Activated T-helper 2 cell treated with anti-CD3 and anti-CD28 coated beads, Interferon-gamma antibody, Interleukin-2, Interleukin-4, amounts not matched to agents 10 μg/mL and 5 μg/mL and 100 μg/mL, durations not matched to agents 14 hours and 24 hours and 36 hours (primary cell): ENCODE measurements at regions of chr19 and their contacts with region 1.

Region 1: DNA sequence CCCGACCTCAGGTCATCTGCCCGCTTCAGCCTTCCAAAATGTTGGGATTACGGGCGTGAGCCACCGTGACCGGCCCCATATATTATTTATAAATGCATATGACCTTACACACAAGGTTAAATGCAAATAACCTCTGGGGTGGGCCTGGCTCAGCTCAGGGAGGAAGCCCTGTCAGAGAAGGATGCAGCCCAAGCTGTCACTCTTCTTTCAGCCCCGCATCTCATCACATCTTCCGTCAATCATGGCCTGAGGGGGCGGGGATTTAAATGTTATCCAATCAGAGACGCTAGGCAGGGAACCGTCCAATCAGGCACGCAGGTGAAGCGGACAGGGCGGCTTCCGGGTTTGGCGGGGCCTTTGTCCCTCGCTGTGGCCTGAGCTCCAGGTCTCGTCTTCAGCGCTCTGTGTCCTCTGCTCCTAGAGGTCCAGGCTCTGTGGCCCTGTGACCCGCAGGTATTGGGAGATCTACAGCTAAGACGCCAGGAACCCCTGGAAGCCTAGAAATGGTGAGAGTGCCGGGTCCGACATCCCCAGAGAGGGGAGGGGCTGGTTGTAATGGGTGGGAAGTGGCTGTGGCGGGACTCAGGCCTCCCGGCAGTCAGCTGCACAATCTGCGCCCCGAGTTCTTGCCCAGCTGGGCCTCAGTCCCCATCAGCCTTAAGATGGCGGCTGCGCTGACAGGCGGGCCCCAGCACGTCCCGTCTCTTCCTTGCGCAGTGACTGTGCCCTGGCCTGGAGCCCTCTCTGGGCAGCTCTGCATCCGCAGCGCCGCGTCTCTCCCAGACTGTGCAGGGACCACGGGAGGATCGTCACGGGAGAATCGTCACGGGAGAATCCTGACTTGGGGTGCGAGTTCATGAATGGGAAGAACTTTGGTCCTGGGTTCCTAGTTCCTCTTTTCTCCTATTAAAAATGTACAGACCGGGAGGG is at the start of gene ZNF430:
- DNase-seq: peak; percentile 94
- H3K4me3 Mint-ChIP-seq: peak within 1 kb of the TSS; percentile 96
- H3K27ac Mint-ChIP-seq: peak within 1 kb of the TSS; percentile 99
- H3K4me1 Mint-ChIP-seq: peaks cover 24% of the 10 kb centered on the region
- H3K27me3 Mint-ChIP-seq: no peaks in the 10 kb centered on the region
- total RNA-seq, gene ZNF430: 19.6 and 22.5 TPM in 2 replicates

Region 2: DNA sequence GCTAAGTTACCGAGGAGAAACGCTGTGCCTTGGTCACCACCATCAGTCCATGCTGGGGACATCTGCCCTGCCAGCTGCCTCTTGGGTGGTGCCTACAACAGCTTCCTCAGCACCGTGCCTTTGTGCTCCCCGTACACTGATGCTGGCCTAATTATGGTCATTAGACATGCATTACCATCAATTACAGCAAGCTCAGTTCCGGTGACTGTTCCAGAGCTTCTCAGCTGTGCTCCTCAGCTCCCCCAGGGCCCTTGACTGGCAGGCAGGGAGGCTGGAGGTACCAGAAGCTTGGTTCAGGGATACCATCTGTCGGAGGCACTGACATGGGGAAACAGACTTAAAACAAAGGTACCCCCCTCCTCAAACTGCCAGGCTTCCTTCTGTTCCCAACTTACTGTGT is 1442.3 kb before region 1 on chr19:
- intact Hi-C with region 1: no loop called
- DNase-seq: no peak
- H3K4me3 Mint-ChIP-seq: no peak overlapping the region
- H3K27ac Mint-ChIP-seq: no peak overlapping the region
- H3K4me1 Mint-ChIP-seq: peaks cover 5% of the 10 kb centered on the region
- H3K27me3 Mint-ChIP-seq: no peaks in the 10 kb centered on the region

Region 3: DNA sequence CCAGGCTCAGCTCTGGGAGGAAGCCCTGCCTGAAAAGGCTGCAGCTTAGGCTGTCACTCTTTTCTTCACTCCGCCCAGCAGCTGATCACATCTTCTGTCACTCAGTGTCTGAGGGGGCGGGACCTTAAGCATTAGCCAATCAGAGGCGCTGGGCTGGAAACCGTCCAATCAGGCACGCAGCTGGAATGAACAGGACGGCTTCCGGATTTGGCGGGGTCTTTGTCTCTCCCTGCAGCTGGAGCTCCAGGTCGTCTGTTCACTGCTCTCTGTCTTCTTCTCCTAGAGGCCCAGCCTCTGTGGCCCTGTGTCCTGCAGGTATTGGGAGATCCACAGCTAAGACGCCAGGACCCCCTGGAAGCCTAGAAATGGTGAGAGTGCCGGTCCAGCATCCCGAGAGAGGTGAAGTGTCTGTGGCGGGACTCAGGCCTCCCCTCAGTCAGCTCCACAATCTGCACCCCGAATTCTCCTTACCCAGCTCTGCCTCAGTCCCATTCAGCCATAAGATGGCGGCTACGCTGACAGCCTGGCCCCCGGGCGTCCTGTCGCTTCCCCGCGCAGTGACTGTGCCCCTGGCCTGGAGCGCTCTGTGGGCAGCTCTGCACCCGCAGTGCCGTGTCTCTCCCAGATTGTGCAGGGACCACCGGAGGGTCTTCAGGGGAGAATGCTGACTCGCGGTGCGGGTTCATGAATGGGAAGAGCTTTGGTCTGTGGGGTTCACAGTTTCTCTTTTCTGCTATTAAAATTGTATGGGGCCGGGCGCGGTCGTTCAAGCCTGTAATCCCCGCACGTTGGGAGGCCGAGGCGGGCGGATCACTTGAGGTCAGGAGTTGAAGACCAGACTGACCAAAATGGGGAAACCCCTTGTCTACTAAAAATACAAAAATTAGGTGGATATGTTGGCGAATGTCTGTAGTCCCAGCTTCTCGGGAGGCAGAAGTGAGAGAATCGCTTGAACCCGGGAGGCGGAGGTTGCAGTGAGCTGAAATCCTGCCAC is 244.2 kb before region 1 on chr19 and contains the start of gene ZNF66:
- intact Hi-C with region 1: loop called (anchors 5 kb)
- DNase-seq: peak; percentile 93
- H3K4me3 Mint-ChIP-seq: peak within 1 kb of the TSS; percentile 94
- H3K27ac Mint-ChIP-seq: peak within 1 kb of the TSS; percentile 93
- H3K4me1 Mint-ChIP-seq: peaks cover 1% of the 10 kb centered on the region
- H3K27me3 Mint-ChIP-seq: no peaks in the 10 kb centered on the region
- total RNA-seq, gene ZNF66: 8.1 and 8.8 TPM in 2 replicates

Region 4: GRCh38 chr19:21082011-21082975 is 61.7 kb after region 1 on chr19 and contains the start of gene ZNF714:
- intact Hi-C with region 1: loop called (anchors 1 kb)
- DNase-seq: peak; percentile 86
- H3K4me3 Mint-ChIP-seq: peak within 1 kb of the TSS; percentile 97
- H3K27ac Mint-ChIP-seq: peak within 1 kb of the TSS; percentile 97
- H3K4me1 Mint-ChIP-seq: peaks cover 27% of the 10 kb centered on the region
- H3K27me3 Mint-ChIP-seq: no peaks in the 10 kb centered on the region
- total RNA-seq, gene ZNF714: 20.1 and 21.4 TPM in 2 replicates

Region 5: GRCh38 chr19:21328885-21329605 is 308.5 kb after region 1 on chr19 and contains the start of gene ZNF708:
- intact Hi-C with region 1: loop called (anchors 10 kb)
- DNase-seq: peak; percentile 78
- H3K4me3 Mint-ChIP-seq: peak within 1 kb of the TSS; percentile 99
- H3K27ac Mint-ChIP-seq: peak within 1 kb of the TSS; percentile 99
- H3K4me1 Mint-ChIP-seq: peaks cover 11% of the 10 kb centered on the region
- H3K27me3 Mint-ChIP-seq: no peaks in the 10 kb centered on the region
- total RNA-seq, gene ZNF708: 11.0 and 12.1 TPM in 2 replicates

Region 6: DNA sequence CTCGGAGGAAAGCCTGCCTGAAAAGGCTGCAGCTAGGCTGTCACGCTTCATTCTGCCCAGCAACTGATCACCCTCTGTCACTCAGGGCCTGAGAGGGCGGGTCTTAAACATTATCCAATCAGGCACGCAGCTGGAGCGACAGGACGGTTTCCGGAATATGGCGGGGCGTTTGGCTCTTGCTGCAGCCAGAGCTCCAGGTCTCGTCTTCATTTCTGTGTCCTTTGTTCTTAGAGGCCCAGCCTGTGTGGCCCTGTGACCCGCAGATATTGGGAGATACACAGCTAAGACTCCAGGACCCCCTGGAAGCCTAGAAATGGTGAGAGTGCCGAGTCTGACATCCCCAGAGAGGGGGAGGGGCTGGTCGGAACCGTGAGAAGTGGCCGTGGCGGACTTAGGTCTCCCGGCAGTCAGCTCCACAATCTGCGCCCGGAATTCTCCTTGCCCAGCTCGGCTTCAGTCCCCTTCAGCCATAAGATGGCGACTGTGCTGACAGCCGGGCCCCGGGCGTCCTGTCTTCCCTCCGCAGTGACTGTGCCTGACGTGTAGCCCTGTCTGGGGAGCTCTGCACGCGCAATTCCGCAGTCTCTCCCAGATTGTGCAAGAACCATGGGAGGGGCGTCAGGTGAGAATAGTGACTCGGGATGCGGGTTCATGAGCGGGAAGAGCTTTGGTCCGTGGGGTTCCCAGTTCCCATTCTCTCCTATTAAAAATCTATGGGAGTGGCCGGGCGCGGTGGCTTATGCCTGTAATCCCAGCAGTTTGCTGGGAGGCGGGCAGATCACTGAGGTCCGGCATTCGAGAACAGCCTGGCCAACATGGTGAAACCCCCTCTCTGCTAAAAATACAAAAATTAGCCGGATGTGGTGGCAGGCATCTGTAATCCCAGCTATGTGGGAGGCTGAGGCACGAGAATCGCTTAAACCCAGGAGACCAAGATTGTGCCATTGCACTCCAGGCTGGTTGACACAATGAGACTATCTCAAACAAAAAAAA is 485.2 kb after region 1 on chr19 and contains the start of gene ZNF429:
- intact Hi-C with region 1: loop called (anchors 2 kb)
- DNase-seq: peak; percentile 86
- H3K4me3 Mint-ChIP-seq: peak within 1 kb of the TSS; percentile 100
- H3K27ac Mint-ChIP-seq: peak within 1 kb of the TSS; percentile 95
- H3K4me1 Mint-ChIP-seq: peaks cover 12% of the 10 kb centered on the region
- H3K27me3 Mint-ChIP-seq: no peaks in the 10 kb centered on the region
- total RNA-seq, gene ZNF429: 3.1 and 5.0 TPM in 2 replicates